Dorsolateral prefrontal cortex (tissue), 120 donors: ENCODE measurements at regions of chr3 and their contacts with region 1.

Region 1: DNA sequence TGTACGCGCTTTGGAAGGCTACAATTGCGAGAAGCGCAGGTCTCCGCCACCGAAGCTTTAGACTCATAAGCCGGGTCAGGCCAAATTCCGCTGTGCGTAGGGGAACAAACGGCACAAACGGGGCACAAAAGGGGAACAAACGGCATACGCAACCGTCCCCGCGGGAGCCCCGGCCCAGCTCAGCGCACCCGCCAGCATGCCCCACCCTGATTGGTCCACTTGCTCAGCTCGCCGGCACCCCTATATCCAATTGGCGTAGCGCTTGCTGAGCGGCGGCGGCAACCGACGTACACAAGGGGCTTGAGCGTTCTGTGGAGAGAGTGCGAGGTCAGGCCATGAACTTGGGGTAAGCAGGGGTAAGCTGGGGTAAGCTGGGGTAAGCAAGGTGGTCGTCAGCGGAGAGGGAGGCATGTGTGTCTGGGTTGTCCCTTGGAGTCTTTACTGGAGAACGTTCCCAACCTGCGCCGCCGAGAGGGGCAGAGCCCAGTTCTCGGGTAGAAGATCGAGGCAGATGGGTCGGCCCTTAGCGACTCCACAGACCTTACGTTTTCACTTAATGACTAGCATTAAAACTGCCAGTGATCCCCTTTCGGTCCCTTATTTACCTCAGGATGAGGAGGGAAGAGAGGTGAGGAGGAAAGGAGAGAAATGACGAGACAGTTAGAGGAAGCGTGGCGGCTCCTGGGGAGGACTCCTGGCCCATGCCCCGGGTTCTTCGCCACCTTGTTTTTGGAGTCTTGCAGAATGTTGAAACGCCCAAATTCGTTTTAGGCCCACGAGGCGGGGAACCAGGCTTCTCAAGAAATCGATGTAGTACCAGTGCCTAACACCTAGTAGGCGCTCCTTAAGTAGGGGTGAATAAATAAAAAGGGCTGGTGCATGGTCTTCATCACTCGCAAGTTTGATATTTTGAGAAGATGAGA is at the start of gene CCDC66:
- DNase-seq: peak; percentile 85 to 96 (median 95)
- H3K4me3 ChIP-seq: peak within 1 kb of the TSS; percentile 67 to 97 (median 85)
- H3K27ac ChIP-seq: peak within 1 kb of the TSS in 57 of 59 donors; percentile 1 to 89 (median 74)
- H3K27me3 ChIP-seq: no peaks in the 10 kb centered on the region
- CTCF ChIP-seq: peak; percentile 25 to 77 (median 60)
- total RNA-seq, gene CCDC66: 35.3 to 94.7 (median 60.8) TPM

Region 2: GRCh38 chr3:56189536-56189935 is 367.6 kb before region 1 on chr3:
- intact Hi-C with region 1: no loop called
- DNase-seq: peak in 1 of 10 donors; percentile 45
- H3K4me3 ChIP-seq: no peak overlapping the region
- H3K27ac ChIP-seq: peak overlapping the region in 3 of 59 donors; percentile 12 to 51 (median 26)
- H3K27me3 ChIP-seq: no peaks in the 10 kb centered on the region
- CTCF ChIP-seq: no peak

Region 3: DNA sequence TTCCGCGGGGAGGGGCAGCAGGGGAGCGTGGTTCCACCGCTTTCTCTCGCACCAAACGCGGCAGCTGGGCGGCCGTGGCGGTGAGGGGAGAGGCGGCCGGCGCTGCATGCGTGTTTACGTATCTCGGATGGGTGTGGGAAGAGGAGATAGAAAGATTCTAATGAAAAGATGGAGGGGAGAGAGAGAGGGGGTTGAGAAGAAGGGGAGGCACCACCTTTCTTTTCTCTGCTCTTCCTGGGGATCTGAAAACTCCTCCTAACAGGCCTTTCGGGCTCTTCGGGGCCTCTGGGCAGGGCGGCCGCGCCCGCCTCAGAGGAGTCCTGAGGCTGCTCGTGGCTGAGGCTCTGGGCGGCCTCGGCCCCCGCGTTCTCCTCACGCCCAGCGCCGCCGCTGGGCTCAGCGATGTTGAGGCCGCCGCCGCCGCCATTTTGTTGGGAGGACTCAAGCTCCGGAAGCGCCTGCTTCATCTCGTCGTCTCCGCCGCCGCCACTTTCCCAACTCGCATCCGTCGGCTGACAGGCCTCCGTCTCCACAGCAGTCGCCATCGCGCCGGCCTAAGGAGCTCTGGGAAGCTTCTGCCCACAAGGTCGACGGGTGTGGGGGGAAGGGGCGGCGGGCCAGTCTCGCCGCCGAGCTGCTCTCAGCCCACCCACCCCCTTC is 125.4 kb after region 1 on chr3:
- intact Hi-C with region 1: loop called in 1 of 2 experiments (anchors 5 kb)
- DNase-seq: peak; percentile 41 to 85 (median 70)
- H3K4me3 ChIP-seq: peak overlapping the region; percentile 71 to 97 (median 88)
- H3K27ac ChIP-seq: peak overlapping the region; percentile 76 to 100 (median 98)
- H3K27me3 ChIP-seq: no peaks in the 10 kb centered on the region
- CTCF ChIP-seq: peak in 1 of 56 donors; percentile 2